Heart right ventricle (tissue), 16 donors: ENCODE measurements at regions of chr3 and their contacts with region 1.

Region 1: DNA sequence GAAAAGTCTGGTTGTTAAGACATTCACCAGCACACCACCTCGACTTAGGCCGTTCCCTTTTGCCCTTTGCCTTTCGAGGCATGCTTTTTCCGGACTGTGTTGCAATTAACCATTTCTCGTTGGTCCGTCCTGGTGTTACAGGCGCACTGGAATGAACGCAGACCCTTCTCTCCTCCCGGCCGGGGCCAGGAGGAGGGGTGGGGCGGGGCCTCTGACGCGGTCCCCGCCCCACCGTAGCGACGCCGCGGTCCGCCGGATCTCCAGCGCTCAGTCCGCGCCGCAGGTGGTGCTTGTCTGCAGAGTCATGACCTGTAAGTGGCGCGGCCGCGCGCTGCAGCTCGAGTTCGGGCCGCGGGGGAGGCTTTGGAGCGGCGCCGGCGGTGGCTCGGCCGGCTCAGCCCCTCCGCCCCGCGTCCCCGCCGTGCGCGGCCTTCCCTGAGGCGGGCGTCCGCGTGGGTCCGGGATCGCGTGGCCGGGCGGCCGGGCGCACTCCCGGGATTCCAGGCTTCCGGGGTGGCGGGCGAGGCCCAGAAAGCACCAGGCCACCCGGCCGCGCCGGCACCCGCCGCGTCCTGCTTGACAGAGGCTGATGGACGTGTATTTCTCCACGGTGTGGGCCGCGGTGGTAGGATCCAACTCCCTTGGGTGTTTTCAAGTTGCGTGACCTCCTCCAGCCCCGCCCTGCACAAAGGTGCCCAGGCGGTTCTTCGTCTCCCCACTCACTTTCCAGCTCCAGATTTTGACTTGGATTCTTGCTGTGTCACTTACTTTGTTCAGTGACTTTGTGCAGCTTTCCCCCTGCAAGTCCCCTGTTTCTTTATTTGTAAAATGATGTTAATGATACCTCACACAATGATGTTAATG is at the start of gene NIT2:
- DNase-seq: peak; percentile 85 to 88
- ATAC-seq: peak; percentile 94 to 99 (median 98)
- H3K4me3 ChIP-seq: peak within 1 kb of the TSS; percentile 46 to 85 (median 69)
- H3K27ac ChIP-seq: peak within 1 kb of the TSS; percentile 46 to 94 (median 84)
- H3K4me1 ChIP-seq: peaks cover 0 to 21% (median 6%) of the 10 kb centered on the region in 9 donors
- H3K27me3 ChIP-seq: no peaks in the 10 kb centered on the region
- CTCF ChIP-seq: no peak
- total RNA-seq, gene NIT2: 39.7 to 56.7 (median 46.6) TPM

Region 2: GRCh38 chr3:100492059-100493006 is 157.6 kb after region 1 on chr3 and contains the start of gene TMEM45A:
- intact Hi-C with region 1: loop called in 1 of 10 experiments (anchors 10 kb)
- DNase-seq: peak; percentile 93 to 97
- ATAC-seq: peak; percentile 100
- H3K4me3 ChIP-seq: peak within 1 kb of the TSS; percentile 32 to 66 (median 58)
- H3K27ac ChIP-seq: peak within 1 kb of the TSS in 9 of 10 donors; percentile 52 to 80 (median 73)
- H3K4me1 ChIP-seq: peaks cover 0 to 22% (median 6%) of the 10 kb centered on the region in 9 donors
- H3K27me3 ChIP-seq: no peaks in the 10 kb centered on the region
- CTCF ChIP-seq: no peak
- total RNA-seq, gene TMEM45A: 0.80 to 7.4 (median 2.1) TPM